ENCODE measurements at regions of chr6 and their contacts with region 1.

Region 1: GRCh38 chr6:135145063-135145800 is 35.9 kb upstream of the MYB start:
- DNase-seq: no peak
- H3K4me3 Mint-ChIP-seq: no peak overlapping the region
- H3K27ac Mint-ChIP-seq: peak overlapping the region; percentile 39
- H3K4me1 Mint-ChIP-seq: peaks cover 53% of the 10 kb centered on the region
- H3K27me3 Mint-ChIP-seq: peaks cover 2% of the 10 kb centered on the region

Region 2: DNA sequence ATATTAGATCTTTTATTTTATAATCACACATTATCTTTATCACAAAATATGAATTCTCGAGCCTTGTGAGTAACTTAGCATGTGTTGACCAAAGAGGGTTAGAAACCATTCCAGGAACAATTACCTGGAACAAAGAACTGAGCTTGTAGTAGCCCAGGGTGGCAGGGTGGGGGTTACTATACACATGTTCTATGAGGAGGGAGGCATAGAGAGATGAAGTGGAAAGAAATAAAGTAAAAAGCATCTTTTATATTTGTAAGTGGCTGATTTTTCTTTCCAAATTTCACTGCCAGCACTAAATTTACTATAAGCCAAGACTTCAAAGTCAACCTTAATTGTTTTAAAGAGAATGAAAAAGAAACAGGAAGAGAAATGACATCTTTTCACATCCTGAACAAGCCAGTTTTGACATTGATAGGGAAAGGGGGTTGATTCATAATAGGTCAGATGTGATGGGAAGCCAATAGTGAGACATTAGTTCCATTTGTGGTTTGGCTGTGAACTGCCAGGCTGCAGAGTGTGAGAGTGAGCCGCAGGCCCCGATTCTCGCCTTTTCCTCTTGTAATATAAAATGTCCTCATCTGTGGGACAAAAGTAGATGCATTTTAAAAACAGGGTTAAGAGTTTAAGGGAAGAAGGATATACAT is 16.8 kb before region 1 on chr6:
- CTCF ChIA-PET with region 1: interaction called, 8 read pairs
- POLR2A ChIA-PET with region 1: interaction called, 7 read pairs
- intact Hi-C with region 1: loop called (anchors 1 kb)
- DNase-seq: peak; percentile 82
- H3K4me3 Mint-ChIP-seq: peak overlapping the region; percentile 24
- H3K27ac Mint-ChIP-seq: peak overlapping the region; percentile 81
- H3K4me1 Mint-ChIP-seq: peaks cover 42% of the 10 kb centered on the region
- H3K27me3 Mint-ChIP-seq: no peaks in the 10 kb centered on the region

Region 3: DNA sequence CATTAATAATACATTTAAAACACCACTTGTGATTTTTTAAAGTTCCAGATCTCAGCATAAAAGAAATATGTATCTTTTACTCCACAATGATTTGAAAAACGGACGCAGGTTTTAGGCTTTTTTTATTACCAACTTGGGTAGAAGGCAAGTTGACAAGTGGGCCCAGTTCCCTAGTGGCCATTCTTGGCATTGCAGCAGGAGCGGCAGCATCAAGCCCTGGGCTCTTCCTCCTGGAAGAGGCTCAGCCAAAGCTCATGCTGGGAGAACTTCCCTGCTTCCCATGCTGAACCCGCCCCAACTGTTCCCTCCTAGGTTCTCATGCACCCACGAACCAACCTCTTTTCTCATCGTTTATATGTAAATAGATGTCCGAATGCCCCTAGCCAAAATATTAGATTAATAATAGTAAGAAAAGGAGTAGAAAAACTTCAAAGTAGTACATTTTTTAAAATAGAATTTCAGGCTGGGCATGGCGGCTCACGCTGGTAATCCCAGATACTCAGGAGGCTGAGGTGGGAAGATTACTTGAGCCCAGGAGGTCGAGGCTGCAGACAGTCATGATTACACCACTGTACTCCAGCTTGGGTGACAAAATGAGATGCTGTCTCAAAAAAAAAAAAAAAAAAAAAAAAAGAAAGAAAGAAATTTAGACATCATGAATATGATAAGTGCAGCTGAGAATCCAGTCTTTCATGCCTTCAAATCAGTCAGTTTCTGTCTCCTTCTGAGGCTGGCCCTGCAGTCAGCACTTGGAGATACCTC is 17.6 kb after region 1 on chr6:
- CTCF ChIA-PET with region 1: interaction called, 15 read pairs
- POLR2A ChIA-PET with region 1: interaction called, 3 read pairs
- intact Hi-C with region 1: loop called (anchors 1 kb)
- DNase-seq: peak; percentile 54
- H3K4me3 Mint-ChIP-seq: peak overlapping the region; percentile 49
- H3K27ac Mint-ChIP-seq: peak overlapping the region; percentile 78
- H3K4me1 Mint-ChIP-seq: peaks cover 61% of the 10 kb centered on the region
- H3K27me3 Mint-ChIP-seq: peaks cover 3% of the 10 kb centered on the region

Region 4: GRCh38 chr6:135423649-135424128 is 278.5 kb after region 1 on chr6:
- CTCF ChIA-PET with region 1: interaction called, 11 read pairs
- POLR2A ChIA-PET with region 1: no interaction called
- intact Hi-C with region 1: loop called (anchors 1 kb)
- DNase-seq: no peak
- H3K4me3 Mint-ChIP-seq: no peak overlapping the region
- H3K27ac Mint-ChIP-seq: no peak overlapping the region
- H3K4me1 Mint-ChIP-seq: peaks cover 4% of the 10 kb centered on the region
- H3K27me3 Mint-ChIP-seq: no peaks in the 10 kb centered on the region

Region 5: GRCh38 chr6:135438907-135439535 is 293.8 kb after region 1 on chr6:
- CTCF ChIA-PET with region 1: no interaction called
- POLR2A ChIA-PET with region 1: no interaction called
- intact Hi-C with region 1: loop called (anchors 2 kb)
- DNase-seq: no peak
- H3K4me3 Mint-ChIP-seq: no peak overlapping the region
- H3K27ac Mint-ChIP-seq: no peak overlapping the region
- H3K4me1 Mint-ChIP-seq: peaks cover 10% of the 10 kb centered on the region
- H3K27me3 Mint-ChIP-seq: no peaks in the 10 kb centered on the region

Measured in activated CD4-positive, alpha-beta memory T cell treated with anti-CD3 and anti-CD28 coated beads for 36 hours (primary cell).